ENCODE measurements at regions of chr1 and their contacts with region 1.

Region 1: DNA sequence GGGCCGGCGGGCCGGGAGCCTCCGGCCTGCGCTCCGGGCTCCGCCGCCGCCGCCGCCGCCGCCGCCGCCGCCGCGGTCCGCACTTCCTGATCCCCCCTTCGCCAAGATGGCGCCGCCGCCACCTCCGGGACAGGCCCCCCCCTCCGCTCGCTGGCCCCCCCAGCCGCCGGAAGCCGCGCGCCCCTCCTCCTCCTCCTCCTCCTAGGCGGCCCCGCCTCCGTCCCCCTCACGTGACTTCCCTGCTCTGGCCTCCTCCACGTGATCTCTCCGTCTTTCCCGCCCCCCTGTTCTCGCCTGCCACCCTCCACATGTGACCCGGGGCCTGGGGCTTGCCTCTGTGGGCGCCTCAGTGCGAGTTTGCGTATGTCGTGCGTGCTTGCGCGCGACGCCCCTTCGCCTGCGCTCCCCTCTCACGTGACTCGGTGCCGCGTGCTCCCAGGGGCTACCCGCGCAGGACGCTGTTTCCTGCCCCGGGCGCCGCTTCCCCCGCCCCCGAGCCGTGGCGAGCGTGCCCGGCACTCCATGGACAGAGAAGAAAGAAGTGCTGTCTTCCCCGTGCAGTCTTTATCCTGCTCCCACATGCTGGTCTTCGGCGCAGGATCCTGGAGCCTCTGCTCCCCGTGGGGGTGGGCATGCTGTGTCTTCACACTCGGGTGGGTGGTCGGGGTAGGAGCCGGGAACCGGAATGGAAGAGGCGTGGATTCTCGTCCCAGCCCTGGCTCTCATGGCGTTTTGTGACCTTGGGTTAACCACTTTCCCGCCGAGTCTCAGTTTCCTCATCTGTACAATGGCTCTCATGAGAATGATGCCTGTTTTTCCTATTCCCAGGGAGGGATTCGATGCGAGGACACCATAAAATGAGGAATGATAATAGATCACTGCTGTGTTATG is at the start of gene UBE2Q1:
- DNase-seq: peak; percentile 99
- H3K4me3 Mint-ChIP-seq: peak within 1 kb of the TSS; percentile 90
- H3K27ac Mint-ChIP-seq: peak within 1 kb of the TSS; percentile 87
- H3K4me1 Mint-ChIP-seq: peaks cover 22% of the 10 kb centered on the region
- H3K27me3 Mint-ChIP-seq: no peaks in the 10 kb centered on the region
- total RNA-seq, gene UBE2Q1: 96.5 and 101 TPM in 2 replicates

Region 2: GRCh38 chr1:154220071-154220969 is 338.5 kb before region 1 on chr1 and contains the start of gene UBAP2L:
- intact Hi-C with region 1: loop called (anchors 5 kb)
- DNase-seq: peak; percentile 99
- H3K4me3 Mint-ChIP-seq: peak within 1 kb of the TSS; percentile 93
- H3K27ac Mint-ChIP-seq: peak within 1 kb of the TSS; percentile 97
- H3K4me1 Mint-ChIP-seq: peaks cover 55% of the 10 kb centered on the region
- H3K27me3 Mint-ChIP-seq: no peaks in the 10 kb centered on the region
- total RNA-seq, gene UBAP2L: 259 and 263 TPM in 2 replicates

Region 3: DNA sequence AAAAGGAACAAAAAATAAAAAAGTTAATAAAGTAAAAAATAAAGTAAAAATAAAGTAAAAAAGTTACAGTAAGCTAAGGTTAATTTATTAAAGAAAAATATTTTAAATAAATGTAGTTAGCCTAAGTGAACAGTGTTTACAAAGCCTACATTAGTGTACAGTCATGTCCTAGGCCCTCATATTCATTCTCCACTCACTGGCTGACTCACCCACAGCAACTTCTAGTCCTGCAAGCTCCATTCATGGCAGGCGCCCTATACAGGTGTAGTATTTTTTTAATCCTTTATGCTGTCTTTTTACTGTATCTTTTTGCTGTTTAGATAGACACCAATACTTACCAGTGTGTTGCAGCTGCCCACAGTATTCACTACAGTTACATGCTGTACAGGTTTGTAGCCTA is 36.8 kb after region 1 on chr1:
- intact Hi-C with region 1: no loop called
- DNase-seq: no peak
- H3K4me3 Mint-ChIP-seq: no peak overlapping the region
- H3K27ac Mint-ChIP-seq: no peak overlapping the region
- H3K4me1 Mint-ChIP-seq: peaks cover 15% of the 10 kb centered on the region
- H3K27me3 Mint-ChIP-seq: no peaks in the 10 kb centered on the region

Region 4: GRCh38 chr1:154607609-154608396 is 49.0 kb after region 1 on chr1 and contains the start of gene ADAR:
- intact Hi-C with region 1: loop called (anchors 1 kb)
- DNase-seq: peak; percentile 92
- H3K4me3 Mint-ChIP-seq: peak within 1 kb of the TSS; percentile 98
- H3K27ac Mint-ChIP-seq: peak within 1 kb of the TSS; percentile 98
- H3K4me1 Mint-ChIP-seq: peaks cover 65% of the 10 kb centered on the region
- H3K27me3 Mint-ChIP-seq: no peaks in the 10 kb centered on the region
- total RNA-seq, gene ADAR: 267 and 282 TPM in 2 replicates

Region 5: GRCh38 chr1:154747740-154748404 is 189.1 kb after region 1 on chr1:
- intact Hi-C with region 1: loop called (anchors 5 kb)
- DNase-seq: peak; percentile 58
- H3K4me3 Mint-ChIP-seq: peak overlapping the region; percentile 83
- H3K27ac Mint-ChIP-seq: peak overlapping the region; percentile 91
- H3K4me1 Mint-ChIP-seq: peaks cover 73% of the 10 kb centered on the region
- H3K27me3 Mint-ChIP-seq: no peaks in the 10 kb centered on the region

Region 6: GRCh38 chr1:154936555-154937084 is 377.8 kb after region 1 on chr1 and contains the start of gene PMVK:
- intact Hi-C with region 1: loop called (anchors 2 kb)
- DNase-seq: peak; percentile 94
- H3K4me3 Mint-ChIP-seq: peak within 1 kb of the TSS; percentile 93
- H3K27ac Mint-ChIP-seq: peak within 1 kb of the TSS; percentile 95
- H3K4me1 Mint-ChIP-seq: peaks cover 45% of the 10 kb centered on the region
- H3K27me3 Mint-ChIP-seq: no peaks in the 10 kb centered on the region
- total RNA-seq, gene PMVK: 44.7 and 44.8 TPM in 2 replicates

Region 7: DNA sequence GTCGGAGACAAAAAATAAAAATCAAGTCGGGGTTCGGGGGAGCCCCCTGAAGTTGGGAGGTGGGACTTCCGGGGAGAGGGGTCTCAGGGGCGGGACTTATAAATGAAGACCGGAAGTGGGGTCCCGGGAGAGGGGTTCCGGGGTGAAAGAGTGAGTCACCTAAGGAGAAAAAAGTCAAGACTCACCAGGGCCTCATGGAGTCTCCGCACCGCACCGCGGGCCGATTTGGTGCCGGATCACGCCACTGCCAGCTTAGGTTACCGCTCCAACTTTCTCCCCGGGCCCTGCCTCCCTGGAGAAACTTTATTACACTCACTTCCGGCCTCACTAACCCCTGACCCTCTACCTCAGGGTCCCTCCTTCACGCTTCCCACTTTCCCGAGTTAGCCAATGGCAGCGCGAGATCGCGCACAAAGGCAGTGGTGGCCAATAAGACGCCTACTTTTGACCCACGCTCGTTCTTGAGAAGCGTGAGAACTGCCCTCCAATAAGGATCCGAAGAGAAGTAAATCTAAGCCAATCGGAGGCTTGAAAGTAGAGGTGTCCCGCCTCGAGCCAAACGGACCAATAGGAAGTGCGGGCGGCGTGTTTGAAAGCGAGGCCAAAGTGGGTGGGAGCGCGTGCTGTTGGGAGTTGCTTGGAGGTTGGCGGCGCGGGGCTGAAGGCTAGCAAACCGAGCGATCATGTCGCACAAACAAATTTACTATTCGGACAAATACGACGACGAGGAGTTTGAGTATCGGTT is 415.4 kb after region 1 on chr1 and contains the start of gene CKS1B:
- intact Hi-C with region 1: loop called (anchors 1 kb)
- DNase-seq: peak; percentile 97
- H3K4me3 Mint-ChIP-seq: no peak within 1 kb of the TSS
- H3K27ac Mint-ChIP-seq: no peak within 1 kb of the TSS
- H3K4me1 Mint-ChIP-seq: peaks cover 32% of the 10 kb centered on the region
- H3K27me3 Mint-ChIP-seq: no peaks in the 10 kb centered on the region
- total RNA-seq, gene CKS1B: 169 and 178 TPM in 2 replicates

Region 8: GRCh38 chr1:155063550-155064110 is 504.8 kb after region 1 on chr1 and contains the start of gene EFNA4:
- intact Hi-C with region 1: loop called (anchors 5 kb)
- DNase-seq: peak; percentile 84
- H3K4me3 Mint-ChIP-seq: peak within 1 kb of the TSS; percentile 96
- H3K27ac Mint-ChIP-seq: peak within 1 kb of the TSS; percentile 68
- H3K4me1 Mint-ChIP-seq: peaks cover 21% of the 10 kb centered on the region
- H3K27me3 Mint-ChIP-seq: no peaks in the 10 kb centered on the region
- total RNA-seq, gene EFNA4: 9.2 and 10.5 TPM in 2 replicates